ENCODE measurements at regions of chr4 and their contacts with region 1.

Region 1: GRCh38 chr4:39638354-39639240 is at the start of gene SMIM14:
- DNase-seq: peak; percentile 99
- H3K4me3 ChIP-seq: peak within 1 kb of the TSS; percentile 58 to 98 (median 78)
- H3K27ac ChIP-seq: peak within 1 kb of the TSS; percentile 96 to 100 (median 98)
- H3K4me1 ChIP-seq: peaks cover 5 to 33% (median 25%) of the 10 kb centered on the region in 4 donors
- H3K27me3 ChIP-seq: no peaks in the 10 kb centered on the region
- CTCF ChIP-seq: peak in 1 of 5 experiments; percentile 56
- EP300 ChIP-seq: peak; percentile 40
- POLR2A ChIP-seq: peak; percentile 98
- total RNA-seq, gene SMIM14: 23.1 to 103 (median 72.4) TPM

Region 2: DNA sequence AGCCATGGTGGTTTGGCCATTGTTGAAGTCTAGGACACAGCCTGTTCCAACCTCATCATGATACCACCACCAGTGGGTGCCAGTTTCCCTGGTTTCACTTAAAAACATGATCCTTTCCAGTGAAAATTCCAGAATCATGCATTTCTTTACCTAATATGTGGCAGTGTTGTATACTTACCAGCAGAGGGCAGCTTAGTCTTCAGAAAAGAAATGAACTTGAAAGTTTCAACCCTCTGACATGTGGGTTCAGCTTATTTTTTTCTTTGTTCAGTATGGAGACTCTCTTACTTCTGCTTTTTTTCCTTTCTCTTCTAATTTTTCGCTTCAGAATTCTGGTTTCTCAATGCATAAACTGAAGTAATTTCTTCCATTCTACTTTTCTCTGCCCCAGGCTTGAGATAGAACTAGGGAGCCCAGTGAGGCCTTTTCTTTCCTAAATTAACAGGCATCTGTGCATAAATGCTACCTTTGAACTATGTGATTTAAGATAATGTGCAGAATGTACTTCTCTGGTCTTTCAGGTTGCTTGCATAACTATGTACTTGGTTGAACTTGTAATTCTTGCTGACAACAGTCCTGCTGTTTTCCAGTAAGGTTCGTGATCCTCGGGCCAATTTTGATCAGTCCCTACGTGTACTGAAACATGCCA is 169.0 kb before region 1 on chr4:
- in situ Hi-C with region 1: loop called in 1 of 4 experiments (anchors 10 kb)
- intact Hi-C with region 1: no loop called
- DNase-seq: no peak
- H3K4me3 ChIP-seq: no peak overlapping the region
- H3K27ac ChIP-seq: peak overlapping the region; percentile 17 to 61 (median 39)
- H3K4me1 ChIP-seq: peaks cover 0 to 22% (median 7%) of the 10 kb centered on the region in 4 donors
- H3K27me3 ChIP-seq: no peaks in the 10 kb centered on the region
- CTCF ChIP-seq: peak; percentile 72 to 91 (median 82)
- EP300 ChIP-seq: no peak
- POLR2A ChIP-seq: no peak

Region 3: GRCh38 chr4:39527273-39528060 is 111.1 kb before region 1 on chr4 and contains the start of gene UGDH:
- in situ Hi-C with region 1: loop called in 1 of 4 experiments (anchors 5 kb)
- intact Hi-C with region 1: loop called (anchors 5 kb)
- DNase-seq: peak; percentile 98
- H3K4me3 ChIP-seq: peak within 1 kb of the TSS; percentile 85 to 94 (median 88)
- H3K27ac ChIP-seq: peak within 1 kb of the TSS; percentile 93 to 97 (median 96)
- H3K4me1 ChIP-seq: peaks cover 7 to 52% (median 25%) of the 10 kb centered on the region in 4 donors
- H3K27me3 ChIP-seq: no peaks in the 10 kb centered on the region
- CTCF ChIP-seq: peak in 1 of 5 experiments; percentile 17
- EP300 ChIP-seq: no peak
- POLR2A ChIP-seq: peak; percentile 99
- total RNA-seq, gene UGDH: 293 to 849 (median 479) TPM

Region 4: GRCh38 chr4:39614487-39615162 is 24.0 kb before region 1 on chr4:
- in situ Hi-C with region 1: no loop called
- intact Hi-C with region 1: loop called (anchors 1 kb)
- DNase-seq: no peak
- H3K4me3 ChIP-seq: no peak overlapping the region
- H3K27ac ChIP-seq: peak overlapping the region in 3 of 4 donors; percentile 9 to 41 (median 28)
- H3K4me1 ChIP-seq: peaks cover 0 to 58% (median 28%) of the 10 kb centered on the region in 4 donors
- H3K27me3 ChIP-seq: no peaks in the 10 kb centered on the region
- CTCF ChIP-seq: no peak
- EP300 ChIP-seq: no peak
- POLR2A ChIP-seq: no peak

Measured in transverse colon (tissue), 4 donors.